Right lobe of liver (tissue), 6 donors: ENCODE measurements at regions of chr15 and their contacts with region 1.

Region 1: DNA sequence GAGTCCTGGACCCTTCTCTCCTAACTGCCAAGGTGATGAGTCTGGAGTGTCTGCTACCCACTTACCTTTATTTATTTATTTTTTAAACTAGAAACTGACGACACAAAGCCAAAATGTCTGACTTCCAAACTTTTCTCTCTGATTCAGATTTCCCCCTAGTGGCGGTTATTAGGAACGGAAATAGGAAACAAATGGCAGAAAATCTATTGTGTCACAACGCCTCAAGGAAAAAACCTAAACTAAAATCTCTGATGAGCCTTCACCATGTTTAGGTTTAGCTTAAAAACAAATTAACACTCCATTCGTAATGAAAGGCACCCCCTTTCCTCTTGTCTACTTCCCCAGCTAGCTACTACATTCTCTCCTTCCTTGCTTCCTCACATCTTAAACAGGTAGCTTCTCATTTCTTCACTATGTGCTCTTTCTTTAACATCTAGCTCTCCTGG is 94.0 kb upstream of the MEX3B start:
- DNase-seq: no peak
- ATAC-seq: peak; percentile 48 to 81 (median 74)
- H3K4me3 ChIP-seq: no peak overlapping the region
- H3K27ac ChIP-seq: no peak overlapping the region
- H3K4me1 ChIP-seq: no peaks in the 10 kb centered on the region
- H3K27me3 ChIP-seq: no peaks in the 10 kb centered on the region
- CTCF ChIP-seq: peak; percentile 67 to 79 (median 76)
- POLR2A ChIP-seq: no peak

Region 2: DNA sequence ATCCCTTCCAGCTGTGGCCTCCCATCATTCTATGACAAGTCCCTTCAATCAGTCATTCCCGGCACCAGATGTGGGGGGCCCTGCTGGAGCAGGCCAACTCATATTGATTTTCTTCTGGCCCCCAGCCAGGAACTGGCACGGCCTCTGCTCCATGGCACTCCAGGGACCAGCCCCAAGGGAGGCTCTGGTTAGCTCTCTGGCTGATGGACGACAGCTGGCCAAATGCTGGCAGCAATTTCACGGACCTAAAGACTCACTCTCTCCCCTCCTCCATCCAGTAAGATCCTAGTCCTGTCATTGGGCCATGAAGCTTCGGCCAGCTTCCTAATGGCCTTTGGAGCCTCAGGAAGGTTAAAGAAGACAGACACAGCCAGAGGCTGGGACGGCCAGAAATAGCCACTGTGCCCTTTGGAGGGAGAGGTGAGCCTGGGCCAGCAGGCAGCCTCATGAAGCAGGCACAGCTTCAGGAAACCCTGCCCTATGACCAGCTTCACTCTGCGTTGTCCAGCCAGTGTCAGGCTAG is 225.1 kb before region 1 on chr15:
- intact Hi-C with region 1: no loop called
- DNase-seq: peak; percentile 30 to 91 (median 84)
- ATAC-seq: peak; percentile 86 to 98 (median 94)
- H3K4me3 ChIP-seq: no peak overlapping the region
- H3K27ac ChIP-seq: no peak overlapping the region
- H3K4me1 ChIP-seq: peaks cover 0 to 18% (median 0%) of the 10 kb centered on the region in 4 donors
- H3K27me3 ChIP-seq: no peaks in the 10 kb centered on the region
- CTCF ChIP-seq: no peak
- POLR2A ChIP-seq: no peak

Region 3: DNA sequence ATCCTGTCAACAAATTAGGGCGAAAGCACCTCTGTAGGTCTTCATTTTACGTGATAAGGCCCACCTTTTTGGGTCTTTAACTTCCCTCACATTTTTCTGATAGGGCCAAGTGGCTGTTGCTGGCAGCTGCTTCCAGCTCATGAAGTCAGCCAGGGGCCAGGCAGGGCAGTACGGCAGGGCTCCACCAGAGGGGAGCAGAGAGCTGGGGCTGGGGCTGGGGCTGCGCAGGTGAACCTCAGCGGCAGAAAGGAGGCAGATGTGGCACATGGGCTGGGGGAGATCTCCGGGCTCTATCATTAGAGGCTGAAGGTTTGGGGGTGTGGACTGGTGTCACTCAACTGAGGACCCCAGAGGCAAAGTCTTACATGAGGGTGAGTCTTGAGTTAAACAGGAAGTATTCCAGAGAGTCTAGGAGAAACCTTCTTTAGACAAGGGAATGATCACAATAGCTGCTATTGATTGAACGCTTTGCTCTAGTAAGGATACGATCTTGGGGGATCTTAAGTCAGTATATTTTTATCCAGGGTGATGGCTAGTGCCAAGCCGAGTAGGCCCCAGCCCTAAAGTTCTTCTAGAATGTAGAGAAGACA is 31.3 kb before region 1 on chr15:
- intact Hi-C with region 1: loop called in 1 of 2 experiments (anchors 5 kb)
- DNase-seq: peak; percentile 75 to 83 (median 78)
- ATAC-seq: peak; percentile 99 to 100 (median 100)
- H3K4me3 ChIP-seq: no peak overlapping the region
- H3K27ac ChIP-seq: no peak overlapping the region
- H3K4me1 ChIP-seq: peaks cover 0 to 2% (median 0%) of the 10 kb centered on the region in 4 donors
- H3K27me3 ChIP-seq: no peaks in the 10 kb centered on the region
- CTCF ChIP-seq: peak; percentile 90 to 94 (median 92)
- POLR2A ChIP-seq: no peak